ENCODE measurements at regions of chr1 and their contacts with region 1.

Region 1: DNA sequence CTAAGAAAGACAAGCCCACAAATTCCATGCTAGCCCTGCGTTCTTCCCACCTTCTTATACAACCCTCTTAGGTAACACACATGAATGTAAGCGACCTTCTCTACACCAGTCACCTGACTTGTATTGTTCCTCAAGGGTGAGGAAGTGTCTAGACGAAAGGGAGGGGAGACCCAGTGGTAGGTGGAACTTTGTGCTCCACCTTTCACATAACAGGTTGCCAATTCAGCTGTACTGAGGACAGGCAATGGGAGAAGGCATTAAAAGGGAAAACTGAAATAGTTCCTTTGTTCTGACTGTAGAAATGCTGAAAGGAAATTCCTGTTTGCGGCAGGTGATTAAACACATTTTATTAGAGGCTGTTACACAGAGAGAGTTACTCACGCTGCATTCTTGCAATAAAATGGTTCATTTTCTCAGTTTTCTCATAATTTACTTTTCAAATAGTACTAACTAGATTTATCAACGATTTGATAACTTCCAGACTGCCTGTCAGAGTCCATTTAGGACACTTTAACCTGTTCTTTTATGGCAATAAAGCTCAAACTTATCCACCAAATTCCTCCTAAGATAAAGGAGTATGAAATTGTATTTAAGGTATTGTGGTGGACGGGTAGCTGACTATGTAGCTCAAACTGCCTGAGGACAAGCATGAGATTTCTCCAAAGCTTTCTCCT is 17.8 kb upstream of the CHRM3 start:
- DNase-seq: peak; percentile 53
- H3K4me3 Mint-ChIP-seq: no peak overlapping the region
- H3K27ac Mint-ChIP-seq: no peak overlapping the region
- H3K4me1 Mint-ChIP-seq: no peaks in the 10 kb centered on the region
- H3K27me3 Mint-ChIP-seq: no peaks in the 10 kb centered on the region
- CTCF ChIP-seq: no peak

Region 2: GRCh38 chr1:239011382-239011781 is 357.2 kb before region 1 on chr1:
- CTCF ChIA-PET with region 1: no interaction called
- POLR2A ChIA-PET with region 1: no interaction called
- intact Hi-C with region 1: no loop called
- DNase-seq: no peak
- H3K4me3 Mint-ChIP-seq: no peak overlapping the region
- H3K27ac Mint-ChIP-seq: no peak overlapping the region
- H3K4me1 Mint-ChIP-seq: no peaks in the 10 kb centered on the region
- H3K27me3 Mint-ChIP-seq: no peaks in the 10 kb centered on the region
- CTCF ChIP-seq: no peak

Region 3: GRCh38 chr1:239386453-239387303 is 18.1 kb after region 1 on chr1 and contains the start of gene CHRM3:
- CTCF ChIA-PET with region 1: interaction called, 12 read pairs
- POLR2A ChIA-PET with region 1: interaction called, 8 read pairs
- intact Hi-C with region 1: no loop called
- DNase-seq: peak; percentile 96
- H3K4me3 Mint-ChIP-seq: peak within 1 kb of the TSS; percentile 89
- H3K27ac Mint-ChIP-seq: peak within 1 kb of the TSS; percentile 1
- H3K4me1 Mint-ChIP-seq: peaks cover 26% of the 10 kb centered on the region
- H3K27me3 Mint-ChIP-seq: peaks cover 55% of the 10 kb centered on the region
- CTCF ChIP-seq: peak; percentile 28
- total RNA-seq, gene CHRM3: 0.56 and 0.71 TPM in 2 replicates

Region 4: DNA sequence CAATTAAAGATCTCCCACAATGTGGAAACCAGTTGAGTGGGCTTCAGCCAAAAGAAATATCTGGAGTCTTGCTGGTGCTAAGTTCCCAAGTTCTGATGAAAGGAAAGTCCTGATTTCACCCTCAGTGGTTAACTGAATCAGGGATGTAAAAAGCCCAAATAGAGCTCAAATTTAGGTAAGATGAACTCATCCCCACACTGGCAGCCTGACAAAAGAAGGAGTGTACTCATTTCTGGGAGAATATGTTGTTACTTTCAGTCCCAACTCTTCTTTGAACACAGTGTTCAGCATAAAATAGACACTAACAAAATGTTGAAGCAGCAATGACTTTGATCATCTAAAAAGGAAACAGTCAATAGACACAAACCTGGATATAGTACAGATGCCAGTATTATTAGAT is 109.5 kb after region 1 on chr1:
- CTCF ChIA-PET with region 1: no interaction called
- POLR2A ChIA-PET with region 1: no interaction called
- intact Hi-C with region 1: no loop called
- DNase-seq: no peak
- H3K4me3 Mint-ChIP-seq: no peak overlapping the region
- H3K27ac Mint-ChIP-seq: no peak overlapping the region
- H3K4me1 Mint-ChIP-seq: no peaks in the 10 kb centered on the region
- H3K27me3 Mint-ChIP-seq: no peaks in the 10 kb centered on the region
- CTCF ChIP-seq: no peak